AG04450 (cell line): ENCODE measurements at regions of chr12 and their contacts with region 1.

Region 1: DNA sequence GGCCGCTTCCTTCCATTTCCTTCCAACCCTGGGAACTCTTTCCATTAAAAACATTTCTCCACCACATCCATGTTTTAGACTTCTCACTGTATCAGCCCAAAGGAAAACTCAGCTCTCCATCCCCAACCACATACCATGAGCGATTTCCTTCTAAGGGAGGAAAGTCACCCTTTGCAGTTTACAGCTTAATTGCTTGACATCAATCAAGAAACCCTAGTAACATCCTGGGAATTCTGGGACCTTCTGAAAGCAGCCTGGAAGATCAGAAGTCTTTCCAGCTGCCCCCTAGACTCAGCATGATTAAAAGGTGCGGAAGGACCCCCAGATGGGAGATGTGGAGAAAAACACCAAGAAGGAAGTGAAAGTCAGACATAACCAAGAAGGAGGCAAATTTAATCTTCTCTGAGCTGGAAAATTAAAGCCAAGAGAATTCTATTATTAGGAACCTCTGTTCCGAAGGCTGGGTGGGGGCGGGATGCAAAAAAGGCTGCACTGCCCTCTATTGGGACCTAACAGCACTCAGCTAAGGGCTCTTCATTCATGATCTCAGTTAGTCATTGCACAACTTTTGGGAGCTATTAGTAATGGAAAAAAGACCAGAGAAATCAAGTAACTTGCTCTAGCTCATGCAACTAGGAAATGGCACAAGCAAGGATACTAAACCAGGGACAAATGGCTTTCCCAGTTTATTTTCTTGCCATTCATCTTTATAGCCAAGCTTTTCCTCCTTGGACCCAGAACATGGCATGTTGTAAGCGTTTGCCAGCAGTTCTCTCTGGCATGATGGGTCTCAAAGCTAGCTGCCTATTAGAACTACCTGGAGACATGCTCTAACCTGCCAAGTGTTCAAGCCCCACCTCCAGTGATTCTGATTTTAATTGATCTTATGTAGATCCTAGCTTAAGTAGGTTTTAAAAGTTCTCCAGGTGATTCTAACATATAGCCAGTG is 73.1 kb upstream of the PLXNC1 start:
- DNase-seq: peak; percentile 71
- H3K4me3 ChIP-seq: no peak overlapping the region
- H3K27ac ChIP-seq: no peak overlapping the region
- H3K27me3 ChIP-seq: peaks cover 3% of the 10 kb centered on the region
- CTCF ChIP-seq: peak; percentile 80

Region 2: DNA sequence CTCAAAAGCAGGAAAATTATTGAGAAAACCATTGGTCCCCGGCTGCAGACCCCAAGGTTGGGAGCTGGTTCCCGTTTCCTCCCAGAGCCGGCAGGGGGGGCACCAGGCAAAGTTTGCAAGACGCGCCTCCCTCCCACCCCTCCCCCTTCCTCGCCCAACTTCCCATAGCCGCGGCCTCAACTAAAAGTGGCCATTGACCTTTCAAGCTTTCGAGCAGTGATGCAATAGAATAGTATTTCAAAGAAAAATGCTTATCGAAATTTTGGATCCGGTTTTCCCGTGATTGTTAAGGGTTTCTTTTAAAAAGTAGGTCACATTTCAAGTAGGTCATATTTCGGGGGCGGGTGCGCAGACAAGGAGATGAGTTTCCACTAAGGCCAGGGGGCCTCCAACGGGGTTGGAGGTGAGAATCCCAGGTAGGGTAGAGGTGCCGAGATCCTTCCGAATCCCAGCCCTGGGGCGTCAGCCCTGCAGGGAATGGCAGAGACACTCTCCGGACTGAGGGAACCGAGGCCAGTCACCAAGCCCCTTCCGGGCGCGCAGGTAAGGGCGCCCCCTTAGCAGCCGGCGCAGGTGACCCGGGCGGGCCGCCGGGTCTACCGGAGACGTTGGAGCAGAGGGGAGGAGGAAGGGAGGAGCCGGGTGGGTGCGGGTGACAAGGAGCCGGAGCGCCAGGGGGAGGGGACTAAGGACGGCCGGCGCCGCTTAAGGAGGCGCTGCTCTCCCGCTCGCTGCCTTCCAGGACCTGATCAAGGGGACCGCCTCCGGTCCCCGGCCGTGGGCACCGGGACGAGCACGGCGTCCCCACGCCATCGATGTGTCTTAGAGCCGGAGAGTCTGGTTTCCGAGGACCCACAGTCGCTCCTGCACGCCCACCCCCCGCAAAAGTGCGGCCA is 505.4 kb before region 1 on chr12:
- CTCF ChIA-PET with region 1: interaction called, 16 read pairs
- POLR2A ChIA-PET with region 1: interaction called, 4 read pairs
- DNase-seq: peak; percentile 65
- H3K4me3 ChIP-seq: peak overlapping the region; percentile 77
- H3K27ac ChIP-seq: peak overlapping the region; percentile 61
- H3K27me3 ChIP-seq: no peaks in the 10 kb centered on the region
- CTCF ChIP-seq: peak; percentile 90

Region 3: DNA sequence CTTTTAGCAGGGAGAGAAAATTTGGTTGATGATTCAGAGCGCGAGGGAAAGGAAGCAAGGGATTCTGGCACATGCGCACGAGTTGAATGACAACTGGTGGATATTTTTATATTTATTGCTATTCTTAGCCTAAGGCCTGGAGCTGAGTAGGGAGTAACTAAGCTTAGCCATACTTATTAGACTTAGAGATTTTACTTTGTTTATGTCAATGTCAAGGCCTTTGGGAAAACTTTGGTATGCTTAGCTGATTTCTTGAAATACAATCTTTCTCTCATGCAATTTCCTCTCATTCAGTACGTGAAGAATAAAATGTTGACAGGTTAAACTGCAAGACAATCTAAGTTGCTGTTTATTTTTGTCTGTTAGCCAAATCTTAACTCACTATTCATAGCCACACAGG is 296.9 kb before region 1 on chr12:
- CTCF ChIA-PET with region 1: interaction called, 10 read pairs
- POLR2A ChIA-PET with region 1: no interaction called
- DNase-seq: peak; percentile 64
- H3K4me3 ChIP-seq: no peak overlapping the region
- H3K27ac ChIP-seq: no peak overlapping the region
- H3K27me3 ChIP-seq: no peaks in the 10 kb centered on the region
- CTCF ChIP-seq: no peak

Region 4: GRCh38 chr12:93879476-93880421 is 195.5 kb before region 1 on chr12:
- CTCF ChIA-PET with region 1: interaction called, 12 read pairs
- POLR2A ChIA-PET with region 1: no interaction called
- DNase-seq: peak; percentile 68
- H3K4me3 ChIP-seq: no peak overlapping the region
- H3K27ac ChIP-seq: peak overlapping the region; percentile 33
- H3K27me3 ChIP-seq: no peaks in the 10 kb centered on the region
- CTCF ChIP-seq: no peak

Region 5: DNA sequence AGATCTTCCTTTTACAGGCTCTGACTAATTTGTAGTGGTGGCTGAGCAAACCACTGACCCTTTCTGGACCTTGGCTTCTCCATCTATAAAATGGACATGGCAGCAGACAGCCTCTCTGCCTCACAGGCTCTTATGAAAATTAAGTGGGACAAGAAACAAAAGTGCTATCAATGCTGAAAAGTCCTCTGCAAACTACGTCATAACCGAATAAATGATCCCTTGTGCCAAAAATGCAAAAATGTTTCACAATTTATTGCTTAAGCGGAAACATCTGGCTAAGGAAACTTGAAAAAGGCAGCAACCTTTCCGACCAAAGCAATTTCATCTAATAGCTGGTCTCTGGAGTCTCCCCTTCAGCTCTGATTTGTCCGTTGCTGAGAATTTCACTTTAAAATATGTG is 35.3 kb before region 1 on chr12:
- CTCF ChIA-PET with region 1: no interaction called
- POLR2A ChIA-PET with region 1: no interaction called
- DNase-seq: no peak
- H3K4me3 ChIP-seq: no peak overlapping the region
- H3K27ac ChIP-seq: no peak overlapping the region
- H3K27me3 ChIP-seq: peaks cover 3% of the 10 kb centered on the region
- CTCF ChIP-seq: no peak

Region 6: DNA sequence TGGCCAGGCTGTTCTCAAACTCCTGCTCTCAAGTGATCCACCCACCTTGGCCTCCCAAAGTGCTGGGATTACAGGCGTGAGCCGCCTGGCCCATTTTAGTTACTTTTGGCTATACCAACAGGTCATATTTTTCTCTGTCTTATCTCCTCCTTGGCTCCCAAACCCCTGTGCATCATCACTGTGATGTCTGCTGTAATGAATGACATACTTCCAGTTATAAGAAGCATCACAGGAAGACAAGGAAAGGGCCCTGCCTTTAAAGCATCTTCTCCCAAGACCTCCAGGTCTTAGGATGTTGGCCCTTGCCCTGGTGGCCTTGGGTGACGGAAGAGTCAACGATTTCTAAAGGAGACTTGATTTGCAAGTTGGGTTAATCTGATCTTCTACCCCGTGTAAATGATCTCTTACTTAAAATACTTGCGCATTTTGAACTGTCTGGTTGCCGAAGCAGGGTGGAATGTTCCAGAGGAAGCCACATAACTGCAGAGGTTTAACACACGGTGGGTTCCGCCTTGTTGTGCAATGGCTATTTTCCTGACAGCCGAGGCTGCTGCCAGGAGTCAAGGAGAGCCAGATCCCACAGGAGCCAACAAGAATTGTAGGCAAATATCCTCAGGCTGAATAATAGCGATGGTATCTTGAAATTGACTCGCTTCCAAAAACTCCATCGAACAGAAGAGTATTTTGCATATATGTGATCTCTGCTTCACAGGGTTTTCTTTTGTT is 17.4 kb after region 1 on chr12:
- CTCF ChIA-PET with region 1: interaction called, 14 read pairs
- POLR2A ChIA-PET with region 1: no interaction called
- DNase-seq: no peak
- H3K4me3 ChIP-seq: no peak overlapping the region
- H3K27ac ChIP-seq: no peak overlapping the region
- H3K27me3 ChIP-seq: peaks cover 3% of the 10 kb centered on the region
- CTCF ChIP-seq: no peak